ENCODE measurements at regions of chr11 and their contacts with region 1.

Region 1: DNA sequence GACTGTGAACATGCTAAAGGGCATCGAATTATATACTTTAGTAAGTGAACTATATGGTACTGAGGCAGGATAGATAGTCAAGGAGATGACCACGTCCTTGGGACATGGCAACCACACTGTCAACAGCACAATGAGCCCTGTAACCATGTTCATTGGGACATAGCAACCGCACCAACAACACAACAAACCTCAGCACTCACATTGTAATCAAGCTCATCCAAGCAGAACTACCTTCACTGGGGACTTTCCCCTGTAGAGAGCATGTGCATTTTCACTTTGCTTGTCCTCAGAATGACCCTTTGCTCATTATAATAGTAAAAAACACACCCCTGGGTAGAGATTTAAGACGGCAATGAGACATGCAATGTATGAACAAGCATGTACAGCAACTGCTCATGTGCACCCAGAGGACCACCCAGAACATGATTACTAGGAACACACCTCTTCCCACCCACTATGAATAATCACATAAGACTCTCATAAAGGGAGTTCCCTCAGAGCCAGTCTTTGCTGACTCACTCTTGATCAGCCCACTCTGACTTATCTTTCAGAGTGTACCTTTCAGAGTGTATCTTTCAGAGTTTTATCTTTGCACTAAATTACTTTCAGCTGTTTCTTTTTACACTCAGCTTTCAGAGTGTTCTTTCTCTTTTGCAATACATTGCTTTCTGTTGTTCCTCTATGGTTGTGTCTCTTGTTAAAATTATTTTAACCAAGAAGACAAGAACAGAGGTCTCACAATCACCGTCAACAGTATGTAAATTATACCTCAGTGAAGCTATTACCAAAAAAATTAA is 4.1 kb upstream of the PLAAT2 start:
- DNase-seq: peak; percentile 67 to 90 (median 72)
- ATAC-seq: peak; percentile 97
- H3K4me3 ChIP-seq: no peak overlapping the region
- H3K27ac ChIP-seq: peak overlapping the region; percentile 75
- H3K4me1 ChIP-seq: peaks cover 24 to 43% of the 10 kb centered on the region in 2 experiments
- H3K27me3 ChIP-seq: no peaks in the 10 kb centered on the region
- CTCF ChIP-seq: no peak
- EP300 ChIP-seq: peak; percentile 90
- POLR2A ChIP-seq: no peak
- RAD21 ChIP-seq: no peak; a peak in 1 of 4 replicates

Region 2: GRCh38 chr11:63508009-63508408 is 59.2 kb before region 1 on chr11:
- CTCF ChIA-PET with region 1: no interaction called
- POLR2A ChIA-PET with region 1: no interaction called
- in situ Hi-C with region 1: no loop called
- intact Hi-C with region 1: loop called (anchors 5 kb)
- DNase-seq: peak; percentile 40 to 82 (median 60)
- ATAC-seq: peak; percentile 91
- H3K4me3 ChIP-seq: no peak overlapping the region
- H3K27ac ChIP-seq: no peak overlapping the region
- H3K4me1 ChIP-seq: peaks cover 32 to 46% of the 10 kb centered on the region in 2 experiments
- H3K27me3 ChIP-seq: no peaks in the 10 kb centered on the region
- CTCF ChIP-seq: peak; percentile 75 to 89 (median 85)
- EP300 ChIP-seq: no peak; the same call in 1 of the 2 replicates
- POLR2A ChIP-seq: no peak
- RAD21 ChIP-seq: peak; percentile 88 to 92

Region 3: DNA sequence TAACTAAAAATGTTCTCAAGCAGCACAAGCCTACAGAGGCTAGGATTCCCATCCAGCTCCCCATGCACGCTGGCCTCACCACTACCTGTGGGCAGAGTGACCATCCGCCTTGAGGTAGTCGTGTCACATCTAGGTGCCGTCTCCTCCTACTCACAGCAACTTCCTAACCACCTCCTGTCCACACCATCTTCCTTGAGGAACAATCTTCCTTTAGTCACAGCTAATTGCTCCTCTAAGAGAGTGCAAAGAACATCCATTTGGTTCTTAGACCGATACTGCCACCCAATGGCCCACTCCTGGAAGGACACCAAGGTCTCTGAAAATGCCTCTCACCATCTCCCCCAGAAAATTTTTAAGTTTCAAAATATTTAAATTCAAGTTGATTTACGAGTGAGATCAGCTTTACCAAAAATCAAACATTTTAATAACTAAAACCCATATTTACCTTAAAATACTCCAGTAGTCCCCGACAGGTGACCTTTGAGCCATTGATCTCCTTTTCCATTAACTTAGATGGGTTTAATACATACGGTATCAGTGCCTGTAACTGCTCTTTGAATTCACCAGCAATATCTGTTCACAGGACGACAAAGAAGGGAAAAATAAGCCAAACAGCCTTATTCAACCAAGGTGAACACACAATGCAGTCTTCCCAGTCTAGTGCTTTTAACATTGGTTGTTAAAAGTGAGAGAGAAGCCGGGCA is 68.7 kb after region 1 on chr11:
- CTCF ChIA-PET with region 1: no interaction called
- POLR2A ChIA-PET with region 1: no interaction called
- in situ Hi-C with region 1: no loop called
- intact Hi-C with region 1: no loop called
- DNase-seq: peak; percentile 63 to 73 (median 70)
- ATAC-seq: peak; percentile 91
- H3K4me3 ChIP-seq: no peak overlapping the region
- H3K27ac ChIP-seq: no peak overlapping the region
- H3K4me1 ChIP-seq: no peaks in the 10 kb centered on the region
- H3K27me3 ChIP-seq: no peaks in the 10 kb centered on the region
- CTCF ChIP-seq: peak; percentile 69 to 89 (median 81)
- EP300 ChIP-seq: no peak
- POLR2A ChIP-seq: no peak
- RAD21 ChIP-seq: peak; percentile 89 to 94